GM13976 (cell line): ENCODE measurements at regions of chr11 and their contacts with region 1.

Region 1: GRCh38 chr11:129930296-129930695 is 34.9 kb upstream of the NFRKB start:
- DNase-seq: no peak
- CTCF ChIP-seq: no peak

Region 2: DNA sequence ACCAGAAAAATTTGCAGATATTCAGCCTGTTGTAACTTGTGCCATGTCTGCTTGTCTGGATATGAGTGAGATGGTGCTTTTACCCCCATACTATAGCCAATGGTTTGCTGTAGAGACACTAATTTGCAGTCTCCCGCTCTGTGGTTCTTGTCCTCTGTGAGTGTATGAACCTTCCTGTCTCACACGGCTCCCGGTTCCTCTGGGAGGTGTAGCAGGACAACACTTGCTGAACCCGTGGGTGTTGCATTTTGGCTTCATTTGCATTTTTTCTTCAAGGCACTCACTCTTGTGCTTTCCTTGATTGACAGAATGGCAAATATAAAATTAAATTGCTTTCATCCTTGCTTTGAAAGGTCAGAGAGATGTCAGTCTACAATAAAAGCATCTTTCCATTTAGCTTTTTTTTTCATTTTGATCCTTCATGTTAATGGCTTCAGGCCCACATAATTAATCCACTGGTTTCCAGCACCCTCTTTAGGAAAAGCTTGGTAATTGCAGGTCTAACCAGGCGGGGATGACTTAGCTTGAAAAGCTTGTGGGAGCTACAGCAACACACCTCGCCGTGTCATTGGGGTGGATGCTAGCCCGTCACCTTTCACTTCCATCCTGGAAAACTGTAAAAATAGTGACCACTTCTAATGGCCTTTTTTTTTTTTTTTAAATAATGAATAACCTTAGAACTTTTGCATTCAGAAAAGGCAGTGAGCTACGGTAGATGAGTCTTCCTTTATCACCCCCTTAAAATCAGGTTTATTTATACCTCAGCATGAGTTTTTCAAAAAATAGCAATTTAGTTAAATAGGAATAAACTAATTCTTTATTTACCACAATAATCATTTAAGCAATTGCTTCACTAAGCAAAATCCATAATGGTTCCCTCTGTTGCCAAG is 201.9 kb after region 1 on chr11:
- in situ Hi-C with region 1: loop called (anchors 5 kb)
- DNase-seq: peak; percentile 80
- CTCF ChIP-seq: peak; percentile 75

Region 3: GRCh38 chr11:130403271-130403804 is 473.0 kb after region 1 on chr11:
- in situ Hi-C with region 1: loop called (anchors 25 kb)
- DNase-seq: no peak
- CTCF ChIP-seq: no peak